GM18951 (cell line): ENCODE measurements at regions of chr22 and their contacts with region 1.

Region 1: DNA sequence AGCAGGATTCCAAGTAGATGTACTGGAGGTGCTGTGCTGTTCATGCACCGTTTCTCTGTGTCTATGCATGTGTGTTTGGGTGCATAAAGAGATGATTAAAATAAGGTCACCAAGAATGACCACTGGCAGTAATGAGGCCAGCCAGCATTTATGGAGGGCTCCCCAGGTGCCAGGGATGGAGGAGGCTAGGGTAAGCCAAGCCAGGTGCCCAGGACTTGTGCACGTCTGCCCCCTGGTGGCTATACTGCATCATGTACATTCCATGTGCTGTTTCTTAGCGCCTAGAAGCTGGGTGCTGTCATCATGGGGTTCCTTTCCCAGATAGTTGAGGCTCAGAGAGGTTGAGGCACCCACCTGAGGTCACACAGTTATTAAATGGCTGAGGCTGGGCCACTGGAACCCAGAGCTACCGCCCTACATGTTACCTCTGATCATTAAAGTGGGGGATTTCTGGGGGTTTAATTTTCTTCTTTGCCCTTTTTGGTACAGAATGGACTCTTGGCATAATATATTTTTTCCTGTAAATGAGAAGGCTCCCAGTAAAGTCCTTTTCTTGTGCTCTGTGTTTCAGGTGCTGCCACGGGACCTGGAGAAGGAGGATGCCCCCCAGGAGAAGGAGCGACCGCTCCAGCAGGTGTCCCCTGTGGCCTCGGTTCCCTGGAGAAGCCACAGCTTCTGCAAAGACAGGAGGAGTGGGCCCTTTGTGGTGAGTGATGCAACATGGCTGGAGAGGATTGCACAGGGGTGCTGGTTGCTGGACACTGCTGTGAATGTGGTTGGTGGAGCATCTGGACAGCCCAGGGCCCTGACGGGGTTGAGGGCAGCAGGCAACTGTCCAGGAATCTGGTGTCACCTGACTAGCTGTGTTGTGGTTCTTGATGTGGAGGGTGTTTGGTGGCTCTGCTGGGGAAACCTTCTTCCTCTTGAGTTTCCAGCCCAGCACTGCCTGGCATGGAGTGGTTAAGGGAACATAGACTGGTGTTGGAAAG is 96.4 kb downstream of the KIAA1671 start:
- POLR2A ChIP-seq: no peak

Region 2: DNA sequence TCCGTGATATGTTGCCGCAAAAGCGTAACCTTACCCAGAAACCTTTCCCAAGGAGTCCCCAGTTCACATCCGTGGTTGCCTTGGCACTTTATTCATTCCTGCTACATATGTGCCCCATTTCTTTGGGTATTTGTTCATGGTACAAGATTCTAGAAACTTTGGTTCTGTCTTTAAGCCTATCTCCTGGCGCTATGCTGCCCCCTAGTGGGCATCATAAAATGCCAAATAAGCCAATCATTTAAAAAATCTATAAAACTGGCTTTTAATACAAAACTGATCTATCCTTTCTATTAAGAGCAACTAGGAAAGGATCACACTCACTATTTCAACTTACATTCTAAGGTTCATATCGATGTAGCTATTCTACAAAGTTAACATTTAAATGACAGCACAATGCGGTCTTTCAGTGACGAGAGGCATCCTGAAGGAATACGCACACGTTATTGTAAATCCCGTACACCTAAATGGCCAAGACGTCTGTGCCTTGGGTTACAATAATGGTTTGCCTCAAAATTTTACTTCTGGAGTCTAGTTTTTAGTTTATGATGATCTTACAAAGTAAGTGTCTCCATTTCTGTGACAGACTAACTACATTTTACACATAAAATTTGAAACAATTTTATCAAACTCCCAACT is 290.7 kb before region 1 on chr22:
- in situ Hi-C with region 1: no loop called
- POLR2A ChIP-seq: no peak

Region 3: GRCh38 chr22:24859587-24859986 is 189.4 kb before region 1 on chr22:
- in situ Hi-C with region 1: no loop called
- POLR2A ChIP-seq: no peak

Region 4: DNA sequence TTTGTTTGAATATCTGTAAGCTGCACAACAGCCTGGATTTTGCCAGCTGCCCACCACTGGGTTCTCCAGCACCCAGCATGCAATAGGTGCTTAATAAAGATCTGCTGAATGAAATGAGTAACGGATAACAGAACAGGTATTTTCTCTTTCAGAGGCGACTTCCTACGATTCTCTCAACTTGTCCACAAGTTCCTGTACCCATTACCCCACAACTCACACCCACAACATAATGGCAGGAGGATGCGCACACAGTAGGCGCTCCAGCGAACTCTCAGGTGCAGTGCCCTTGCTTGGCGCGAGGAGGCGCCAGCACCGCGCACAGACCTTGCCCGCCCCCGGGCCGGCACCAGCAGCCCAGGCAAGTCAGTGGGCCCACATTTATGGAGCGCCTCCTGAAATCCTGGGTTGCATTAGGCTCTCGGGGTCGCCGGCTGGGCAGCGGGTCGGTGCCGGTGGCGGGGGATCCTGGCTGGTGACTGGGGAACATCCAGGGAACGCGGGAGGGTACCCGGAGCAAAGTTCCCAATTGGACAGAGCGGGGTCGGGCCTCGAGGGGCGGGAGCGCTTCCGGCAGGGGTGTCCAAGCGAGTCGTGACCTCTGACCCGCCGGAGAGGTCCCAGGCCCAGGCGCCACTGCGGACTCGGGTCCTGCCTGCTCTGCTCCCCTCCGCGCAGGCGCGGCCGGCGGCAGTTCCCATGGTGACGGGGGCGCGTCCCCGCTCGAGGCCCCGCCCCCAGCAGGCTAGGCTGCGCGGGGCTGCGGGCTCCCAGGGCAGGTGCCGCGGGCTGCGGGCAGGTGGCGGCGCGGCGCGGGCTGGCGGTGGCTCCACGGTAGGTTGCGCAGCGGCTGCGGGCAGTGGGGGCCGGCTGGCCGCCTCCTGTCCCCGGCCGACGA is 96.8 kb before region 1 on chr22 and contains the start of gene KIAA1671:
- in situ Hi-C with region 1: loop called (anchors 10 kb)
- POLR2A ChIP-seq: no peak